Activated CD8-positive, alpha-beta memory T cell treated with anti-CD3 and anti-CD28 coated beads, Interleukin-2, amount 10 ng/mL, durations not matched to agents 7 days and 5 days (primary cell): ENCODE measurements at regions of chr16 and their contacts with region 1.

Region 1: DNA sequence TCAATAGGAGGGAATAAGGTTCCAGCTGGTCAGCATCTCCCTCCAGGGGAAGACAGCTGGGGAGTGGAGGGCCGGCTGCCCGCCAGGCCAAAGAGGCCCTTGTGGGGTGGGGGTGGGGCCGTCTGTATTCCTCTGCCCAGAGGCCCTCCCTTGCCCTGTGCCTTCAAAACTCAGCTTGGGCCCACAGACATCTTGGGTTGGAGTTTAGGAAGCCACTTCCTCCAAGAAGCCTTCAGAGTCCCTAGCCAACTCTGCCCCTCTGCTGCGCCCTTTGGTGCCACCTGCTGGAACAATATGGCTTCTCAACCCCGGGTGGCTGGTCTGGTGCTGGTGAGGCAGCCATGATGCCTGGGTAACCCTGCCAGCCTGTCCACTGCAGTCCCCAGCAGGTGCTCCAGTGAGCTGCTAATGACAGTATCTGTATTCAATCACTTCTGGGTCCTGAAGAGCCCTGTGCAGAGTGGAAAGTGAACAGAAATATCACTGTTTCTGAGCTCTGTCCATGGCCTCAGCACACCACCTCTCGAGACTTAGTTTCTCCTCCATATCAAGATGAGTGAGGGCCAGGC is 16.7 kb downstream of the HSD11B2 start:
- DNase-seq: peak; percentile 86
- ATAC-seq: peak; percentile 92
- H3K4me3 Mint-ChIP-seq: no peak overlapping the region
- H3K27ac Mint-ChIP-seq: no peak overlapping the region
- H3K4me1 Mint-ChIP-seq: peaks cover 4% of the 10 kb centered on the region
- H3K27me3 Mint-ChIP-seq: no peaks in the 10 kb centered on the region

Region 2: DNA sequence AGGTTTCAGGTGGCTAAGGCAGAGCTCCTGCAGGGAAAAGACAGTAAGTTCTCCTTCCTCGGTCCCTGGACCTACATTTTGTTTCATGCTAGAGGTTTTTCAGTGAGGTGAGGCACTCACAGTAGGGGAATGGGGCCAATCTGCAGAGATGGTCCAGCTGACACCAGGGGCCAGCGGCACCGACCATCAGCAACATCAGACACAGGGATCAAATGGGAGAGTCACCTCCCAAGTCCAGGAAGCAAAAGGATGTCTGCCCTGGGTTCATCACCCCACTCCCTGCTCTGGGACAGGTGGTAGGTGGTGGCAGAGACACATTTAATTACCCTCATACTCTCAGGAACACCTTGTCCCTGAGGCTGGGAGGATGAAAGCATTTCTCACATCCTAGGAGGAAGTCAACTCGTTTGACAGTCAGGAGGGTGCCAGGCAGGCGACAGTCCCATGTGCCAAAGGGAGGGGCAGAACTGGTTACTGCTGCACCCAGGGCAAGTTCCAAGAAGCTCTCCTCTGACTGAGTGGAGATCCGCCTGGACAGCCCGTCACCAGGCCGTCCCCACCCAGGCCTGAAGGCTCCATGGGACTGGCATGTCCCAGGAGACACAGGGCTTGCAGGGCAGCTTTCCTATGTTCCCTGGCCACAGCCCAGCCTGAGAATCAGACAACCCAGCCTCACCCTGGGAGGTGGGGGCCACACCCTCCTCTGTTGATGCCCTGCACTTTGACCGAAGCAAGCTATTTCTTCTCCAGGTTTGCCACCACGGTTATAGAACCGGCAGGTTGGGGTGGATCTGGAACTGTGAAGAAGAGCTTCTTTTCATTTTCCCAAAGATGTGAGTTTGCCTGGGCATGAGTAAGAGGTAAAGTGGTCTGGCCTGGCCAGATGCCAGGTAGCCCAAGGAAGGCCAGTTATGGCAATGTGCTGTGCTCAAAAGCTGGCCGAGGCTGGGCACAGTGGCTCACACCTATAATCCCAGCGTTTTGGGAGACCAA is 14.3 kb after region 1 on chr16:
- CTCF ChIA-PET with region 1: interaction called, 14 read pairs
- DNase-seq: no peak
- ATAC-seq: no peak
- H3K4me3 Mint-ChIP-seq: no peak overlapping the region
- H3K27ac Mint-ChIP-seq: no peak overlapping the region
- H3K4me1 Mint-ChIP-seq: peaks cover 6% of the 10 kb centered on the region
- H3K27me3 Mint-ChIP-seq: no peaks in the 10 kb centered on the region